ENCODE measurements at regions of chr19 and their contacts with region 1.

Region 1: DNA sequence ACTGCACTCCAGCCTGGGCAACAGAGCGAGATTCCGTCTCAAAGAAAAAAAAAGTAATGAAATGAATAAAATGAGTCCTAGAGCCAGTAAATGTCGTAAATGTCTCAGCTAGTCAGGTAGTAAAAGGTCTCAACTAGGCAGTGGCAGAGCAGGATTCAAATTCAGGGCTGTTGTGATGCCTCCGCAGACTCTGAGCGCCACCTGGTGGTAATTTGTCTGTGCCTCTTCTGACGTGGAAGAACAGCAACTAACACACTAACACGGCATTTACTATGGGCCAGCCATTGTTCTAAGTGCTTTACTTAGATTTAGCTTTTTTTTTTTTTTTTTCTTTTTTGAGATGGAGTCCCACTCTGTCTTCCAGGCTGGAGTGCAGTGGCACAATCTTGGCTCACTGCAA is 30.2 kb downstream of the CYP2F1 start:
- H3K4me3 ChIP-seq: no peak overlapping the region
- H3K27ac ChIP-seq: no peak overlapping the region
- H3K4me1 ChIP-seq: no peaks in the 10 kb centered on the region
- CTCF ChIP-seq: peak; percentile 91

Region 2: GRCh38 chr19:41050434-41050833 is 94.0 kb before region 1 on chr19:
- CTCF ChIA-PET with region 1: no interaction called
- POLR2A ChIA-PET with region 1: no interaction called
- H3K4me3 ChIP-seq: no peak overlapping the region
- H3K27ac ChIP-seq: no peak overlapping the region
- H3K4me1 ChIP-seq: no peaks in the 10 kb centered on the region
- CTCF ChIP-seq: no peak

Region 3: DNA sequence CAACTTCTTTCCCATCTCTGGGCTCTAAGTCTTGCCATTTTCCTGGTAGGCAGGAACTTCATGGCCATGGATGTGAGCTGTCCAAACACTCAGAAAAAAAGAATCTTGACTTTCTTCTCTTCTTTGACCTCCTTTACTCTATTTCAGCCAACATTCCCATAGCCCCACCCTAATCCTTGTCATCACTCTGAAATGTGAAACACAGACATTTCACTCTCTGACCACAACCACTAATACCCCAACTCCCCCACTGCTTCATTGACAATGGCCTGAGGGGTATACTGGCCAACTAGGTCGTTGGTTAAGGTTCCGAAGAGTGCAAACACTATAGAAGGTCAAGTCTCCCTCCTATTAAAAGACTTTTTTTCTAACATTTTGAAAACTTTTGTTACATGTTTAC is 60.9 kb before region 1 on chr19:
- CTCF ChIA-PET with region 1: interaction called, 10 read pairs
- POLR2A ChIA-PET with region 1: no interaction called
- H3K4me3 ChIP-seq: no peak overlapping the region
- H3K27ac ChIP-seq: no peak overlapping the region
- H3K4me1 ChIP-seq: no peaks in the 10 kb centered on the region
- CTCF ChIP-seq: no peak

Region 4: DNA sequence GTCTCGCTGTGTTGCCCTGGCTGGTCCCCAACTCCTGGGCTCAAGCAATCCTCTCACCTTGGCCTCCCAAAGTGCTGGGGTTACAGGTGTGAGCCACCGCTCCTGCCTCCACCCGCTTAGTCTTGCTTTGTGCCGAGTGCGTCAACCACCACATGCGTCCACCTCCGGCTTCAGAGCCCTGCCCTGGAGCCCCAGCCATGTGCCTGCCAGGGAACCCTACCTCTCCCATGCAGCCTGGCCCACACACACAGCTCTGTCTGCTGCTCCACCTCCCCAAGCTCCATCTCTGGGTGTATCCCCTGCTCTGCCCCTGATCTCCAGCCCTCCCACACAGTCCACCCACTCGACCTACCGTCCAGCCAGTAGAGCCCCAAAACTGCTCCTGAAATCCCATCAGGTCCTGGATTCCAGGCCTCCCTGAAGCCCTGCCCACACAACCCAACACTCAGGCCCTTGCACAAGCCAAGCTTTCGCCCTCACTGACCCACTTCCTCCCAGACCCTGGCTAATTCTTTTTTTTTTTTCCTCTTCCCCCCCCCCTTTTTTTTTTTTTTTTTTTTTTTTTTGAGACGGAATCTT is 20.6 kb before region 1 on chr19:
- CTCF ChIA-PET with region 1: interaction called, 25 read pairs
- POLR2A ChIA-PET with region 1: no interaction called
- H3K4me3 ChIP-seq: no peak overlapping the region
- H3K27ac ChIP-seq: no peak overlapping the region
- H3K4me1 ChIP-seq: no peaks in the 10 kb centered on the region
- CTCF ChIP-seq: no peak